Mammary epithelial cell (primary cell): ENCODE measurements at regions of chr17 and their contacts with region 1.

Region 1: DNA sequence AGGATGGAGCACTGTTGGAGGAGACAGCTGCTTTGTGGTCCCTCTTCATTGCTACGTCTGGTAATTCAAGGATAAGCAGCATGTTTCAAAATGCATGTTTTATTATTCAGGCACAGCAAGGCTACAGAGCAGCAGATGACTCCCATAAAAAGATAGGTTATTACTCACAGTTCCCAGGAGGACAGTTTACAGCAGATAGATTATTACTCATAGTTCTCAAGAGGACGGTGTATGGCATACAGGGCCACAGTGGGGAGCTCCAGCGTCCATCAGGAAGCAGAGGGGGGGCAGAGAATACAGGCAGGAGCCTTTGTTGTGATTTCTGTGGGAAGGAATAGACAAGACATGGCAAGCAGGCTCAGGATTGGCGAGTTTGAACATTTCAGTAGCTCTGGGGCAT is 72.9 kb downstream of the DNAH9 start:
- DNase-seq: no peak
- H3K4me3 ChIP-seq: no peak overlapping the region
- H3K27ac ChIP-seq: no peak overlapping the region
- H3K4me1 ChIP-seq: no peaks in the 10 kb centered on the region
- H3K27me3 ChIP-seq: no peaks in the 10 kb centered on the region
- CTCF ChIP-seq: no peak

Region 2: GRCh38 chr17:11459861-11460331 is 211.2 kb before region 1 on chr17:
- CTCF ChIA-PET with region 1: no interaction called
- dilution Hi-C with region 1: no loop called
- in situ Hi-C with region 1: loop called in 1 of 2 experiments (anchors 25 kb)
- intact Hi-C with region 1: no loop called
- DNase-seq: no peak
- H3K4me3 ChIP-seq: no peak overlapping the region
- H3K27ac ChIP-seq: no peak overlapping the region
- H3K4me1 ChIP-seq: no peaks in the 10 kb centered on the region
- H3K27me3 ChIP-seq: no peaks in the 10 kb centered on the region
- CTCF ChIP-seq: no peak

Region 3: GRCh38 chr17:11700668-11701067 is 29.5 kb after region 1 on chr17:
- CTCF ChIA-PET with region 1: no interaction called
- dilution Hi-C with region 1: no loop called
- in situ Hi-C with region 1: no loop called
- intact Hi-C with region 1: no loop called
- DNase-seq: no peak
- H3K4me3 ChIP-seq: no peak overlapping the region
- H3K27ac ChIP-seq: no peak overlapping the region
- H3K4me1 ChIP-seq: no peaks in the 10 kb centered on the region
- H3K27me3 ChIP-seq: no peaks in the 10 kb centered on the region
- CTCF ChIP-seq: no peak

Region 4: GRCh38 chr17:11730747-11731146 is 59.6 kb after region 1 on chr17:
- CTCF ChIA-PET with region 1: no interaction called
- dilution Hi-C with region 1: loop called (anchors 5 kb)
- in situ Hi-C with region 1: no loop called
- intact Hi-C with region 1: no loop called
- DNase-seq: no peak
- H3K4me3 ChIP-seq: no peak overlapping the region
- H3K27ac ChIP-seq: no peak overlapping the region
- H3K4me1 ChIP-seq: no peaks in the 10 kb centered on the region
- H3K27me3 ChIP-seq: no peaks in the 10 kb centered on the region
- CTCF ChIP-seq: no peak